Right ventricle myocardium superior (tissue), 1 donor: ENCODE measurements at regions of chr13 and their contacts with region 1.

Region 1: GRCh38 chr13:101757446-101758039 is 305.1 kb downstream of the ITGBL1 start:
- DNase-seq: no peak
- ATAC-seq: peak; percentile 80

Region 2: GRCh38 chr13:101514788-101515187 is 242.8 kb before region 1 on chr13:
- intact Hi-C with region 1: loop called (anchors 5 kb)
- DNase-seq: no peak
- ATAC-seq: peak; percentile 67